ENCODE measurements at regions of chr3 and their contacts with region 1.

Region 1: DNA sequence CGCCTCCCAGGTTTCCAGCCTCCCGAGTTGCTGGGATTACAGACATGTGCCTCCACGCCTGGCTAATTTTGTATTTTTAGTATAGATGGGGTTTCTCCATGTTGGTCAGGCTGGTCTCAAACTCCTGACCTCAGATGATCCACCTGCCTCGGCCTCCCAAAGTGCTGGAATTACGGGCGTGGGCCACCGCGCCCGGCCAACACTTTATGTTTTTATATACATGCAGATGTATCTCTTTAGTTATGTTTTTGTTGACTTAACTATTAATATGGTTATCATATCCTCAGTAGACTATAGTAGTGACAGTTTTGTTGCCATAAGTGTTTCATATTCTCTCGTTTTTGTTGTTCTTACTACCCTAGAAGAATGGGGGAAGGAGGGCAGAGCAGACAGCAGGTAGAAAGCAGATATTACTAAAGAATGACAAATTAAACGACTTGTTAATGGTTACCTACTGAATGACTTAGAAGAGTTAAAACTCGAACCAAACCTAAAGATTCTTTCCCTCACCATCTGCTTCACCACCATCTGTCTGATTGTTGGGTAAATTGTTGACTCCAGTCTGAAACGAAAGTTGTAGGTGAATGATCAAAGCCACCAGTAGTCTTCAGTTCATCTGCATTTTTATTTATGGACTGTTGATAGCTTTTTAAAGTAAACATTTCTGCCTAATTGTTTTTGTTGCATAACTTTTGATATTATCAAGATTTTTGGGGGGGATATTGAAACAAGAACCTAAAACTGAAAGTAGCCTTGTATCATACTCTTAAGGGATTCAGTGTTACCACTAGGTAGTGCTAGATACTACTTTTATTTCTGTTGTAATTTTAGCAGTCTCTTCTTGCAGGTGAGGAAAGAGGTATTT is 89.3 kb downstream of the RASA2 start:
- DNase-seq: no peak
- ATAC-seq: peak; percentile 66
- H3K4me3 ChIP-seq: no peak overlapping the region
- H3K27ac ChIP-seq: no peak overlapping the region
- H3K4me1 ChIP-seq: no peaks in the 10 kb centered on the region
- H3K27me3 ChIP-seq: no peaks in the 10 kb centered on the region
- CTCF ChIP-seq: peak; percentile 25 to 56 (median 34); a peak in 3 of 6 replicates
- POLR2A ChIP-seq: no peak
- RAD21 ChIP-seq: peak; percentile 40; the same call in 1 of the 2 replicates

Region 2: GRCh38 chr3:141597931-141598330 is 21.8 kb after region 1 on chr3:
- CTCF ChIA-PET with region 1: no interaction called
- POLR2A ChIA-PET with region 1: no interaction called
- RAD21 ChIA-PET with region 1: no interaction called
- intact Hi-C with region 1: no loop called
- DNase-seq: no peak
- ATAC-seq: no peak
- H3K4me3 ChIP-seq: no peak overlapping the region
- H3K27ac ChIP-seq: no peak overlapping the region
- H3K4me1 ChIP-seq: no peaks in the 10 kb centered on the region
- H3K27me3 ChIP-seq: no peaks in the 10 kb centered on the region
- CTCF ChIP-seq: no peak
- POLR2A ChIP-seq: no peak
- RAD21 ChIP-seq: no peak

Region 3: GRCh38 chr3:141777957-141778813 is 202.1 kb after region 1 on chr3:
- CTCF ChIA-PET with region 1: no interaction called
- POLR2A ChIA-PET with region 1: no interaction called
- RAD21 ChIA-PET with region 1: no interaction called
- intact Hi-C with region 1: no loop called
- DNase-seq: no peak
- ATAC-seq: no peak
- H3K4me3 ChIP-seq: no peak overlapping the region
- H3K27ac ChIP-seq: no peak overlapping the region
- H3K4me1 ChIP-seq: no peaks in the 10 kb centered on the region
- H3K27me3 ChIP-seq: no peaks in the 10 kb centered on the region
- CTCF ChIP-seq: no peak
- POLR2A ChIP-seq: no peak
- RAD21 ChIP-seq: no peak

Region 4: GRCh38 chr3:141913150-141913811 is 337.2 kb after region 1 on chr3:
- CTCF ChIA-PET with region 1: no interaction called
- POLR2A ChIA-PET with region 1: no interaction called
- RAD21 ChIA-PET with region 1: no interaction called
- intact Hi-C with region 1: loop called (anchors 5 kb)
- DNase-seq: peak; percentile 34
- ATAC-seq: peak; percentile 75
- H3K4me3 ChIP-seq: no peak overlapping the region
- H3K27ac ChIP-seq: no peak overlapping the region
- H3K4me1 ChIP-seq: no peaks in the 10 kb centered on the region
- H3K27me3 ChIP-seq: no peaks in the 10 kb centered on the region
- CTCF ChIP-seq: peak; percentile 57 to 75 (median 67); a peak in 5 of 6 replicates
- POLR2A ChIP-seq: no peak
- RAD21 ChIP-seq: peak; percentile 74

Region 5: DNA sequence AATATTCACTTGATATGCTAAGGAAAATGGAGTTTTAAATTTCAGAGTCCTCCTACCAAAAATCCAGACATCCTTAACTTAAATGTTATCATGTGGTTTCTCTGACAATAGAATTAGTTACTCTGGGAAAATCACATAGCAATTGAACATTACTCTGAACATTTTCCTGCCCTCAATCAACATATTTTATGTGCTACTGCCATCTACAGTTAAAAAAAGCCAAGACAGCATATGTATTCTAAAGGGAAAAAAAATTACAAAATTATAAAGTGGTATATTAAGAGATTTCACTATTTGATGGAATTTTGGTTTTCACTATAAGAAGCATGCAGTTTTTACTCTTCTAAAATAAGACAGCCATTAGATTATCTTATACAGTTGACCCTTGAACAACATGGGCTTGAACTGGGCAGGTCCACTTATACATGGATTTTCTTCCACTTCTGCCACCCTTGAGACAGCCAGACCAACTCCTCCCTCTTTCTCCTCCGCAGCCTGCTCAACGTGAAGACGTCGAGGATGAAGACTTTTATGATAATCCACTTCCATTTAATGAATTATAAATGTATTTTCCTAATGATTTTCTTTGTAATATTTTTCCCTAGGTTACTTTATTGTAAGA is 422.7 kb after region 1 on chr3:
- CTCF ChIA-PET with region 1: no interaction called
- POLR2A ChIA-PET with region 1: no interaction called
- RAD21 ChIA-PET with region 1: no interaction called
- intact Hi-C with region 1: loop called (anchors 2 kb)
- DNase-seq: no peak
- ATAC-seq: peak; percentile 67
- H3K4me3 ChIP-seq: no peak overlapping the region
- H3K27ac ChIP-seq: no peak overlapping the region
- H3K4me1 ChIP-seq: peaks cover 7 to 14% of the 10 kb centered on the region in 2 experiments; a peak in 3 of 4 replicates
- H3K27me3 ChIP-seq: no peaks in the 10 kb centered on the region
- CTCF ChIP-seq: peak in 2 of 3 experiments; percentile 41 to 59; a peak in 3 of 6 replicates
- POLR2A ChIP-seq: no peak
- RAD21 ChIP-seq: peak; percentile 69

Region 6: GRCh38 chr3:142028243-142028777 is 452.2 kb after region 1 on chr3:
- CTCF ChIA-PET with region 1: no interaction called
- POLR2A ChIA-PET with region 1: no interaction called
- RAD21 ChIA-PET with region 1: no interaction called
- intact Hi-C with region 1: no loop called
- DNase-seq: peak; percentile 68
- ATAC-seq: peak; percentile 85
- H3K4me3 ChIP-seq: peak overlapping the region; percentile 42 to 57
- H3K27ac ChIP-seq: no peak overlapping the region; the same call in 1 of the 2 replicates
- H3K4me1 ChIP-seq: peaks cover 0 to 16% of the 10 kb centered on the region in 2 experiments; a peak in 2 of 4 replicates
- H3K27me3 ChIP-seq: no peaks in the 10 kb centered on the region
- CTCF ChIP-seq: no peak
- POLR2A ChIP-seq: no peak
- RAD21 ChIP-seq: no peak